ENCODE measurements at regions of chrX and their contacts with region 1.

Region 1: GRCh38 chrX:1453951-1454785 is 1.5 kb upstream of the ASMTL start:
- DNase-seq: peak; percentile 88 to 93
- H3K4me3 ChIP-seq: peak overlapping the region; percentile 66 to 90 (median 72)
- H3K27ac ChIP-seq: peak overlapping the region; percentile 42 to 97 (median 92)
- H3K4me1 ChIP-seq: peaks cover 17 to 35% (median 29%) of the 10 kb centered on the region in 4 donors
- H3K27me3 ChIP-seq: no peaks in the 10 kb centered on the region
- CTCF ChIP-seq: peak in 5 of 7 experiments; percentile 83 to 97 (median 92)
- EP300 ChIP-seq: no peak
- POLR2A ChIP-seq: no peak

Region 2: GRCh38 chrX:519741-520140 is 934.4 kb before region 1 on chrX:
- intact Hi-C with region 1: no loop called
- DNase-seq: no peak
- H3K4me3 ChIP-seq: no peak overlapping the region
- H3K27ac ChIP-seq: no peak overlapping the region
- H3K4me1 ChIP-seq: no peaks in the 10 kb centered on the region
- H3K27me3 ChIP-seq: peaks cover 0 to 9% (median 0%) of the 10 kb centered on the region in 3 donors
- CTCF ChIP-seq: no peak
- EP300 ChIP-seq: no peak
- POLR2A ChIP-seq: no peak

Region 3: DNA sequence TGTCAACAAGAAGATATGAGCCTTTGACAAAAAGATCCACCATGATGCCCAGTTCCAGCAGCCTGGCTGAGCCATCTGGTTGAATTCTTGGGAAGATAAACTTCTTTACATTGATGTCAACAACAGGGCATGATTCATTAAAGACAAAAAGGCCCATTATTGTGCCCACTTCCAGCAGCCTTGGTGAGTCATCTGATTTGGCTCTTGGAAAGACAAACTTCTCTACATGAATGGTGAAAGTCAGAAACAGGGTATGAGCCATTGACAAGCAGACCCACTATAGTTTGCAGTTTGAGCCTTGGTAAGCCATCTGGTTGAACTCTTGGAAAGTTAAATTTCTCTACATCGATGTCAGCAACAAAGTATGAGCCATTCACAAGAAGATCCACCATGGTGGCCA is 189.6 kb before region 1 on chrX:
- intact Hi-C with region 1: no loop called
- DNase-seq: no peak
- H3K4me3 ChIP-seq: no peak overlapping the region
- H3K27ac ChIP-seq: no peak overlapping the region
- H3K4me1 ChIP-seq: no peaks in the 10 kb centered on the region
- H3K27me3 ChIP-seq: no peaks in the 10 kb centered on the region
- CTCF ChIP-seq: no peak
- EP300 ChIP-seq: no peak
- POLR2A ChIP-seq: no peak

Region 4: GRCh38 chrX:1368385-1368698 is 85.8 kb before region 1 on chrX:
- intact Hi-C with region 1: no loop called
- DNase-seq: no peak
- H3K4me3 ChIP-seq: no peak overlapping the region
- H3K27ac ChIP-seq: no peak overlapping the region
- H3K4me1 ChIP-seq: no peaks in the 10 kb centered on the region
- H3K27me3 ChIP-seq: no peaks in the 10 kb centered on the region
- CTCF ChIP-seq: no peak
- EP300 ChIP-seq: no peak
- POLR2A ChIP-seq: no peak

Region 5: DNA sequence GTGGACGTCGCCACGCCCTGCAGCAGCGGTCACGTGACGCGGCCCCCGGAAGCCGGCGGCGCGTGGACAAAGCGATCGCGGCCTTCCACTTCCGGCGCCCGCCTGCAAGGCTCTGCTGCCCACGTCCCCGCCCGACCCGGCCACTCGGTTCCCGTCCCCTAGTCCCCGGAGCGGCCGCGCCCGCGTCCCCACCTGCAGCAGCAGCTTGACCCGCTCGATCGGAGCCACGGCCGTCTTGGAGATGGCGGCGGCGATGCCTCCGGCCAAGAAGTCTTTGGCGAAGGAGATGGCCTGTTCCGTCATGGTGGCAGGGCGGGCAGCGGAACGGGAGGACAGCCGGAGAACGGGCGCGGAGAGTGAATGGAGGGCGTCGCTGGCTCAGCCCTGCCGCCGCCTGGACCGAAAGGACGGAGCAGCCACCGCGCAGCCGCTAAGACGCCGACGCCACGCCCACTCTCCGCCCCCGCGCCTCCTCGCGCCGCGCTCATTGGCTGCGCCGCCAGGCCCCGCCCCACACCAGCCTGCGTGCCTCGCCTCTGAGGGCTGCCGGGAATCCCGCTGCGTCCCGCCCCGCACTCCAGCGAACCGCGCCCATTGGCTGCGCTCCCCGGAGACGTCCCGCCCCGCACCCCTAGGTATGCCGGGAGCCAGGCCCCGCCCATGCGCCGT is 62.3 kb before region 1 on chrX and contains the start of gene SLC25A6:
- intact Hi-C with region 1: loop called (anchors 10 kb)
- DNase-seq: peak; percentile 99 to 100
- H3K4me3 ChIP-seq: peak within 1 kb of the TSS; percentile 92 to 100 (median 96)
- H3K27ac ChIP-seq: peak within 1 kb of the TSS; percentile 97 to 100 (median 99)
- H3K4me1 ChIP-seq: peaks cover 33 to 67% (median 51%) of the 10 kb centered on the region in 4 donors
- H3K27me3 ChIP-seq: no peaks in the 10 kb centered on the region
- CTCF ChIP-seq: peak in 2 of 7 experiments; percentile 16 to 17
- EP300 ChIP-seq: no peak
- POLR2A ChIP-seq: peak in 1 of 4 donors; percentile 32
- total RNA-seq, gene SLC25A6: 119 to 707 (median 391) TPM

Region 6: GRCh38 chrX:1591102-1591900 is 137.1 kb after region 1 on chrX and contains the start of gene AKAP17A:
- intact Hi-C with region 1: loop called (anchors 5 kb)
- DNase-seq: peak; percentile 96 to 98
- H3K4me3 ChIP-seq: peak within 1 kb of the TSS; percentile 93 to 99 (median 98)
- H3K27ac ChIP-seq: peak within 1 kb of the TSS; percentile 84 to 97 (median 92)
- H3K4me1 ChIP-seq: peaks cover 21 to 46% (median 32%) of the 10 kb centered on the region in 4 donors
- H3K27me3 ChIP-seq: no peaks in the 10 kb centered on the region
- CTCF ChIP-seq: peak in 2 of 7 experiments; percentile 26 to 37
- EP300 ChIP-seq: no peak
- POLR2A ChIP-seq: peak in 1 of 4 donors; percentile 14
- total RNA-seq, gene AKAP17A: 32.3 to 141 (median 109) TPM

Region 7: GRCh38 chrX:2608638-2609430 is 1154.7 kb after region 1 on chrX:
- intact Hi-C with region 1: loop called (anchors 10 kb)
- DNase-seq: peak; percentile 89 to 94
- H3K4me3 ChIP-seq: peak overlapping the region; percentile 62 to 91 (median 86)
- H3K27ac ChIP-seq: peak overlapping the region; percentile 84 to 90 (median 89)
- H3K4me1 ChIP-seq: peaks cover 4 to 28% (median 26%) of the 10 kb centered on the region in 4 donors
- H3K27me3 ChIP-seq: no peaks in the 10 kb centered on the region
- CTCF ChIP-seq: no peak
- EP300 ChIP-seq: no peak
- POLR2A ChIP-seq: no peak